ENCODE measurements at regions of chr17 and their contacts with region 1.

Region 1: DNA sequence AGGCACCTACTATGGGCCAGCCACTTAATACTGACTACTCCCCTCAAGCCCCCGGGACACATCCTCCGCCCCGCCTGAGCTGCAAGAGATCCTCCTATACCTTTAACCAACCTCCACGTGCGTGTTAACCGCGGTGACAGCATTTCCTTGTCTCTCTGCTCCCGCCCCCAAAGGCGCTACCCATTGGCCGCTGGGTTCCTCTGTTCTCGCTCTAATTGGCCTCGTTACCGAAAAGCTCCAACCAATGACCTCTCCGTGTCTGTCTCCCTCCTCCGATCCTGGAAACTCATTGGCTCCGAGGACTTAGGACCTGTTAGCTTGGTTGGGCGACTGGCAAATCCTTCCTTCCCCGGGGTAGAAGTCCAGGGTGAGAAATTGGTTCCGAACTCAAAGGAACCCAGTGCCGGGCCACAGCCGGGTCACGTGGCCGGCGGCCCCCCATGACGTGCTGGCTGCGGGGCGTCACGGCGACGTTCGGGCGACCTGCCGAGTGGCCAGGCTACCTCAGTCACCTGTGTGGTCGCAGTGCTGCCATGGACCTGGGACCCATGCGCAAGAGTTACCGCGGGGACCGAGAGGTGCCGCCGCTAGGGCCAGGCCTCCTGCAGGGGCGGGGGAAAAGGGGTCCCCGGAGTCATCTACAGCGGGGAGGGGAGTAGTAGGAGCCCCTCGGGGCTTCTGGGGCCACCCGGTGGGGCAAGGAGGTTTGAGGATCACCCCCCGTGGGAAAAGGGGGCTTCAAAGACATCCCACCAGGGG is at the start of gene PNPO:
- DNase-seq: peak; percentile 93
- H3K4me3 ChIP-seq: peak within 1 kb of the TSS; percentile 87
- H3K27me3 ChIP-seq: no peaks in the 10 kb centered on the region
- CTCF ChIP-seq: 0 out of 2 replicates have a peak, but pooled peaks have one; percentile 7
- polyA plus RNA-seq, gene PNPO: 15.9 and 19.6 TPM in 2 replicates

Region 2: GRCh38 chr17:47957591-47958428 is 16.4 kb after region 1 on chr17 and contains the start of gene PRR15L:
- CTCF ChIA-PET with region 1: interaction called, 12 read pairs
- POLR2A ChIA-PET with region 1: no interaction called
- DNase-seq: no peak
- H3K4me3 ChIP-seq: no peak within 1 kb of the TSS
- H3K27me3 ChIP-seq: peaks cover 2% of the 10 kb centered on the region; the same call in 1 of the 2 replicates
- CTCF ChIP-seq: no peak
- polyA plus RNA-seq, gene PRR15L: not detected in 2 replicates

Region 3: DNA sequence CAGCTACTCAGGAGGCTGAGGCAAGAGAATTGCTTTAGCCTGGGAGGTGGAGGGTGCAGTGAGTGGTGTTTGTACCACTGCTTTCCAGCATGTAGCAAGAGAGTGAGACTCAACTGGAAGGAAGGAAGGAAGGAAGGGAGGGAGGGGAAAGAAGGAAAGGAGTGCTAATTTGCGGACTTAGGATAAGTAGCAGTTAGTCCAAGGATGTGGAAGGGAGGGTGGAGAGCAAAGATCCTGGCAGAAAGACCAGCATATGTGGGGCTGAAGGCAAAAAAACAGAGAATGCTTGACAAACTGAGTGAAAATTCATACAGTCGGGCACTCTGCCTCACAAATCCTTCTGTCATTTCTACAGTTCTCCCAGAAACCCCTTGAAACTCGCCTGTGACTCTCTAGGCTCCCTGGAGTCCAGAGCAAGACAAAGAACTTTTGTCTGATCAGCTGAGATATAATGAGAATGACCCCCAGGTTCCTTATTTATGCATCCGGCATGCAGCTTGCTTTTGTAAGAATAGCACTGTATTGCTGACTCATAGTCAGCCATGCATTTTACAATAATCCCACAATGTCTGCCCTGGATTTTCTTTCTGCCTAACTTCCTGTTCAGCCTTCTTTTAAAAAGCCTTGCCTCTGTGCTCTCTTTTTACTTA is 61.0 kb after region 1 on chr17:
- CTCF ChIA-PET with region 1: interaction called, 5 read pairs
- POLR2A ChIA-PET with region 1: interaction called, 11 read pairs
- DNase-seq: peak; percentile 28
- H3K4me3 ChIP-seq: no peak overlapping the region
- H3K27me3 ChIP-seq: no peaks in the 10 kb centered on the region
- CTCF ChIP-seq: no peak

Region 4: DNA sequence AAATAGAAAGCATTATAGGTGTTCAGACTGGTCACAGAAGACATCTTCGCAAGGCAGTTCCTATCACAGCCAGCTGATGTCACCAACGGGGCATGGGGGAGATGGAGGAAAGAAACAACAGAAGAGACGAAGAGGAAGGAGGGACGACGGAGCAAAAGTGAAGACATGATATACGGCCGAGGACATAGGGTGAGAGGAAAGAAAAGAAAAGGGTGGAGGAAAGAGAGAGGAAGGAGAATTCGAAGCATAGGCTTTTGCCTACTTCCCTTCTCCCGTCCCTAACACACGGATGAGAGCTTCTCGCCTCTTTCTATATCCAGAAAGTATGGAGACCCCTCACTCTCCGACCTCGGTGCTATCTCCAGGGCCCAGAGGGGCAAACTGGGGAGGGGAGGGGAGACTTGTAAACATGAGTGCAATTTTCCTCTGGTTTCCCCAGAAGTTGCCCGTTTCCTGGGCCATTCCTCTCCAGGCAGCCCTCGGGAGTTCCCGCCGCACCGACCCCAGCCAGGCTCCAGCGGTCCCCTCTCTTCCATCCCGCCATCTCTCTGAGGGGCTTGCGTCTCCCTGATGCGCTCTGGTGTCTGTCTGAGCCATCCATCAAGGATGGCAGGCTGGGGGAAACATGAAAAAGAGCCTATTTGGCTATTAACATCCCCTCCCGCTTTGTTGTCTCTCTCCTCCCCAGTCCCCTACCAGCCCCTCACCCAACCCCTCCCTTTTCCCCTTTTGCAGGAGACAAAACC is 70.2 kb after region 1 on chr17:
- CTCF ChIA-PET with region 1: interaction called, 304 read pairs
- POLR2A ChIA-PET with region 1: no interaction called
- DNase-seq: no peak
- H3K4me3 ChIP-seq: peak overlapping the region; percentile 40
- H3K27me3 ChIP-seq: no peaks in the 10 kb centered on the region; the same call in 1 of the 2 replicates
- CTCF ChIP-seq: peak; percentile 74

Measured in BJ (cell line).